ENCODE measurements at regions of chr5 and their contacts with region 1.

Region 1: DNA sequence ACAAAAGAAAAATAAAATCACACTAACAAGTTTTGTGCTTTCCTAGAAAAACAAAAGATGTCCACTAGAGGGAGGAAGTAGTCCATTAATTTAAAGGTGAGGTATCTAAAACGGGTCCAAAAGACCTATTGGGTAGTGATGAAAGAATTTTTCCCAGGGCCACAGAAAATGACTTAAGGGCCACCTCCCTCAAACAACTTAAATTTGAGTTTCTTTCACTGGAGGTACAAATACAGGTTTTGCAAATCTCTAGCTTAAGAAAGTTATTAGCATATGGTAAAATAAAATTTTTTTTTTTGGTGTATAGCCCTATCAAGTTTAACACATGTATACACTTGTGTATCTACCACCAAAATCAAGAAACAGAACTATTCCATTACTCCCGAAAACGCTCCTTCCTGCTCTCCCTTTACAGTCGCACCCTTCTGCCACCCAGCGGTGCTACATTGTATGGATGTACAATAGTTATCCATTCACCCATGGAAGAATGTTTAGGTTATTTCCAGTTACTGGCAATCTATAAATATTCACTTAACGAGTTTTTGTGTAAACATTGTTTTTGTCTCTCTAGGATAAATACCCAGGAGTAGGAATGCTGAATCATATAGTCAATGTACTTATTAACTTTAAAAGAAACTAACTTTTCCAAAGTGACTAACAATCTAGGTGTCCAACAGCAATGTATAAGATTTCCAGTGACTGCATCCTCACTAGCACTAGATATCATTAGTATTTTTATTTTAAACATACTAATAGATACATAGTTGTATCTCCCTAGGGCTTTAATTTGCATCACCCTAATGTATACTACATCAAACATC is 21.9 kb downstream of the DEPDC1B start:
- DNase-seq: peak in 2 of 9 experiments; percentile 34 to 51
- ATAC-seq: no peak
- H3K4me3 ChIP-seq: no peak overlapping the region
- H3K4me3 Mint-ChIP-seq: no peak overlapping the region
- H3K27ac ChIP-seq: no peak overlapping the region
- H3K27ac Mint-ChIP-seq: no peak overlapping the region
- H3K4me1 ChIP-seq: no peaks in the 10 kb centered on the region
- H3K4me1 Mint-ChIP-seq: no peaks in the 10 kb centered on the region
- H3K27me3 ChIP-seq: no peaks in the 10 kb centered on the region
- H3K27me3 Mint-ChIP-seq: no peaks in the 10 kb centered on the region
- CTCF ChIP-seq: peak; percentile 51

Region 2: GRCh38 chr5:60604771-60605170 is 73.3 kb before region 1 on chr5:
- CTCF ChIA-PET with region 1: no interaction called
- POLR2A ChIA-PET with region 1: no interaction called
- intact Hi-C with region 1: no loop called
- DNase-seq: no peak
- ATAC-seq: no peak
- H3K4me3 ChIP-seq: no peak overlapping the region
- H3K4me3 Mint-ChIP-seq: no peak overlapping the region
- H3K27ac ChIP-seq: no peak overlapping the region
- H3K27ac Mint-ChIP-seq: no peak overlapping the region
- H3K4me1 ChIP-seq: no peaks in the 10 kb centered on the region
- H3K4me1 Mint-ChIP-seq: no peaks in the 10 kb centered on the region
- H3K27me3 ChIP-seq: no peaks in the 10 kb centered on the region
- H3K27me3 Mint-ChIP-seq: no peaks in the 10 kb centered on the region
- CTCF ChIP-seq: no peak

Region 3: DNA sequence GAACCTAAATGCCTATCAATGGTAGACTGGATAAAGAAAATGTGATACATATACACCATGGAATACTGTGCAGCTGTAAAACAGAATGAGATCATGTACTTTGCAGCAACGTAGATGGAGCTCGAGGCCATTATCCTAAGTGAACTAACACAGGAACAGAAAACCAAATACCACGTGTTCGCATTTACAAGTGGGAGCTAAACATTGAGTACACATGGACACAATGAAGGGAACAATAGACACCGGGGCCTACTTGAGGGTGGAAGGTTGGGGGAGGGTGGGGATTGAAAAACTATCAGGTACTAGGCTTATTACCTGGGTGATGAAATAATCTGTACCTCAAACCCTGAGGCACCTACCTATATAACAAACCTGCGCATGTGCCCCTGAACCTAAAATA is 44.4 kb after region 1 on chr5:
- CTCF ChIA-PET with region 1: no interaction called
- POLR2A ChIA-PET with region 1: no interaction called
- intact Hi-C with region 1: no loop called
- DNase-seq: no peak
- ATAC-seq: no peak
- H3K4me3 ChIP-seq: no peak overlapping the region
- H3K4me3 Mint-ChIP-seq: no peak overlapping the region
- H3K27ac ChIP-seq: no peak overlapping the region
- H3K27ac Mint-ChIP-seq: no peak overlapping the region
- H3K4me1 ChIP-seq: no peaks in the 10 kb centered on the region
- H3K4me1 Mint-ChIP-seq: no peaks in the 10 kb centered on the region
- H3K27me3 ChIP-seq: no peaks in the 10 kb centered on the region
- H3K27me3 Mint-ChIP-seq: peaks cover 11% of the 10 kb centered on the region
- CTCF ChIP-seq: no peak

Region 4: GRCh38 chr5:60960591-60960990 is 282.5 kb after region 1 on chr5:
- CTCF ChIA-PET with region 1: no interaction called
- POLR2A ChIA-PET with region 1: no interaction called
- intact Hi-C with region 1: loop called (anchors 2 to 5 kb)
- DNase-seq: peak in 3 of 9 experiments; percentile 18 to 49 (median 30)
- ATAC-seq: peak; percentile 59
- H3K4me3 ChIP-seq: no peak overlapping the region
- H3K4me3 Mint-ChIP-seq: no peak overlapping the region
- H3K27ac ChIP-seq: no peak overlapping the region
- H3K27ac Mint-ChIP-seq: no peak overlapping the region
- H3K4me1 ChIP-seq: peaks cover 5% of the 10 kb centered on the region
- H3K4me1 Mint-ChIP-seq: peaks cover 22% of the 10 kb centered on the region
- H3K27me3 ChIP-seq: no peaks in the 10 kb centered on the region
- H3K27me3 Mint-ChIP-seq: no peaks in the 10 kb centered on the region
- CTCF ChIP-seq: peak; percentile 74

Measured in CD8-positive, alpha-beta T cell (primary cell).